Activated CD4-positive, alpha-beta memory T cell treated with anti-CD3 and anti-CD28 coated beads for 36 hours (primary cell): ENCODE measurements at regions of chr16 and their contacts with region 1.

Region 1: DNA sequence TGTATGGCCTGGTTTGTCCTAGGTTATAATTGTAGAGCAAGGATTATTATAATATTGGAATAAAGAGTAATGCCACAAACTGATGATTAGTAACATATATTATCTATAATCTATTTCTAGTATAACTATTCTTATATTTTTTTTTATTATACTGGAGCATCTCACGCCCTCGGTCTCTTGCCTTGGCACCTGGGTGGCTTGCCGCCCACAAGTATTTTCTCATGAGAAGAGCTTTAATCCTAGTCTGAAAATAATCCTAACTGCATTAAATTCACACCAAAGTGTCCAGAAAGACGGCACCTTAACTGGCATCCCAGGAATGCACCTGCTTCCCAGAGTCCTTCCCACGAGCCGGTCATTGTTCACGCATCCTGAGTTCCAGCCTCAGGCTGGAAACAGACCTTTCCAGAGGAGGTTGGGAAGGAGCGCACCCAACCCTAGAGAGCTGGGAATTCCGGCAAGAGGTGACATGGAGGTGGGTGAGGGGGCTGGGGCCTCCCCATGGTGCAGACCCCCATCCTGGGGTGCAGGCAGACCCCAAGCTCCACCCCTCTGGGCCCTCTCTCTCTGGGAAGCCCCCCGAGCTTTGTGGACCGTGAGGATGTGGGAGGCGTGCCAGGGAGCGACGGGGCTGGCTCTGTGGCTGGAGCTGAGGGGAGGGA is 15.9 kb downstream of the CHMP1A start:
- DNase-seq: no peak
- H3K4me3 Mint-ChIP-seq: no peak overlapping the region
- H3K27ac Mint-ChIP-seq: no peak overlapping the region
- H3K4me1 Mint-ChIP-seq: peaks cover 9% of the 10 kb centered on the region
- H3K27me3 Mint-ChIP-seq: no peaks in the 10 kb centered on the region

Region 2: GRCh38 chr16:89155184-89155679 is 486.4 kb before region 1 on chr16:
- CTCF ChIA-PET with region 1: no interaction called
- POLR2A ChIA-PET with region 1: no interaction called
- intact Hi-C with region 1: no loop called
- DNase-seq: no peak
- H3K4me3 Mint-ChIP-seq: no peak overlapping the region
- H3K27ac Mint-ChIP-seq: no peak overlapping the region
- H3K4me1 Mint-ChIP-seq: no peaks in the 10 kb centered on the region
- H3K27me3 Mint-ChIP-seq: no peaks in the 10 kb centered on the region

Region 3: GRCh38 chr16:89574681-89575246 is 66.8 kb before region 1 on chr16:
- CTCF ChIA-PET with region 1: interaction called, 8 read pairs
- POLR2A ChIA-PET with region 1: no interaction called
- intact Hi-C with region 1: loop called (anchors 2 kb)
- DNase-seq: peak; percentile 82
- H3K4me3 Mint-ChIP-seq: peak overlapping the region; percentile 46
- H3K27ac Mint-ChIP-seq: no peak overlapping the region
- H3K4me1 Mint-ChIP-seq: peaks cover 3% of the 10 kb centered on the region
- H3K27me3 Mint-ChIP-seq: peaks cover 13% of the 10 kb centered on the region

Region 4: GRCh38 chr16:89602273-89602951 is 39.2 kb before region 1 on chr16:
- CTCF ChIA-PET with region 1: interaction called, 3 read pairs
- POLR2A ChIA-PET with region 1: no interaction called
- intact Hi-C with region 1: loop called (anchors 5 kb)
- DNase-seq: peak; percentile 81
- H3K4me3 Mint-ChIP-seq: no peak overlapping the region
- H3K27ac Mint-ChIP-seq: no peak overlapping the region
- H3K4me1 Mint-ChIP-seq: peaks cover 12% of the 10 kb centered on the region
- H3K27me3 Mint-ChIP-seq: no peaks in the 10 kb centered on the region